Left cardiac atrium (tissue), 4 donors: ENCODE measurements at regions of chr9 and their contacts with region 1.

Region 1: DNA sequence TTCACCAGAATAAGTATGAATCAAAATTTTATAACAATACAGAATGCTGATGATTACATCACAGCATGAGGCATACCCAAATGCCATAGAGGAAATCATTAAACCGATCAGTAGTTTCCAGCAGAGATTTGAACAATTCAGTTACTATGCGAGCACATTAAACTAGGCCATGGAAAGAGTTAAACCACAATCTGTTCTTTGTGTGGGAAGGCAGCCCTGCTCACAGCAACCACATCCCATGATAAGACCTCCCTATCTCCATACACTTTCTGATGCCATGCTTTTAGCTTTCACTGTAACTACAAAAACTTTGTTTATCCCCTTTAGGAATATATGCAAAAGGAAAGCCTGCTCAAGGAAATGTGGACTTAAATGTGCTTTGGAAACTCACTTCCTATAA is 4.5 kb downstream of the NFIB start:
- DNase-seq: no peak
- ATAC-seq: peak in 1 of 2 donors; percentile 39

Region 2: DNA sequence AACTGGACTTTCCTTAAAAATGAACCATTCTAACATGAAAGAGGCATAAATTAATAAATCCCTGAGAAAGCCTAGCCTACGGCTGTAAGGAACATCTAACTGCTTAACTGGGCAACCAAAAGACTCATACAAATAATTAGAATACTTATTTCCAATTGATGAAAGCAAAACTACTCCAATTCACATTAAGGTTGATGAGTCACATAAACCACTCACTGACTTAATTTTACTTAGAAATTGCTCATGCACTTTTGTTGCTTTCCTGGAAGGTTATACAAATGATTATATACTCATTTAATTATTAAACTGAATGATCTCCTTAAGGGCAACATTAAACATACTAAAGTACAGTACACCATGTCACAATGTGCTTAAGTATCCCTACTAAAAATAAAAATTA is 97.3 kb before region 1 on chr9:
- intact Hi-C with region 1: loop called in 1 of 2 experiments (anchors 10 kb)
- DNase-seq: no peak
- ATAC-seq: peak in 1 of 2 donors; percentile 25

Region 3: DNA sequence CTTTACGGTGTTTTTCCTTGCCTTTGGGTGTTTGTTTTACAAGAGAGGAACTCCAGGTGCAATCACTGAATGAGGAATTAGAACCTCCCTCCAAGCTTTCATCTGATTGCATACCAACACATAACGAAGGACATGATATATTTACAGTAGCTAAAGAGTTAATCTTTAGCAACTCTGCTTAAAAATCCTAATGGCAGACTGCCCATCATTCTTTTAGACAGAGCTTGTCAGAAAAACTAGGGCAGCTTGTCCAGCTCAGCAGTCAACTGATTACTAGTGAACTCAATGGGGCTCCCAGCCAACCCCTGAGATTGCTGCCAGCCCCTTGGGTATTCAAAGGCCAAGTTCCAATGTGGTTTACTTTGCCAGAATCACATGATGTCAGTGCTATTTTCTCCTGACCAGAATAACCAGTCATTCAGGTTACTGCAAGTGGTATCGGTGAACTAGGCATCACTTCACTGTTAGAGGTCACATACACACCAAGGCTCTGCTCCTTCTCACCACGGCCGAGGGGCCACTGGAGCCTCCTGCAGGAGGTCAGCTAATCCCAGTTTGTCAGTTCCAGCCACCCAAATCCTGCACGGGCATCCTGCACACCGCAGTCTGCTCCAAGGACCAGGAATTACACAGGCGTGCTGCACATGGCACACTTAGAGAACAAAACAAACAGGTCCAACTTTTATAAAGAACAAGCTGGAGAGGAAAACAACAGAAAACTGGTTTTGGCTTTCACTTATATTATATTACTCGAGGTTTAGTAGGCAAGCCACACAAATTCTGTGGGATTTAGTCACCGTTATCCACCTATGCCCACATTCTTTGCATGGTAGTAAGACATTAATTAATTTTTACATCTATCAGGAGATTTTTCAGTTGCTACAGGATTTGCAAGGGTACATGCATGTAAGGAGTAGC is 58.0 kb before region 1 on chr9:
- intact Hi-C with region 1: loop called in 1 of 2 experiments (anchors 10 kb)
- DNase-seq: peak; percentile 86
- ATAC-seq: peak; percentile 95 to 97